Pancreas (tissue), 10 donors: ENCODE measurements at regions of chr22 and their contacts with region 1.

Region 1: DNA sequence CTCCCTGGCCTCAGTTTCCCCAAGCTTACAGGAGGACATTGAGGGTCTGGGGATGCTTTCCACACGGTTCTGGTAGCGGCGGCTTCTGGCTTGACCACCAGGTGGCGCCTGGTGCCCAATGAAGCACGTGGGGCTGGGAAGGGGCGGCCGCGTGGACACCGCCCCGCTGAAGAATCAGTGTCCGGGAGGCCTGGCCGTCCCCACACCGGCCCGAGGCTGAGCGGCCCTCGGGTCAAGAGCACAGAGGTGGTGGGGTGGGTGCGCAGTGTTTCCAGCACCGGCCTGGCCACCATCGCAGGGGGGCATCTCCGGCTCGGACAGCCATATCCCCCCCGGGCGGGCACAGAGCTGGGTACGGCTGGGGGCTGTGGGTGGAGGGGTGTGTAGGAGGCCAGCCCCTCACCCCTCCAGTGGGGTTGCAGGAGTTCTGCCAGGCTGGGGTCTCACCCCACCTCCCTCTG is 27.8 kb upstream of the PPARA start:
- DNase-seq: peak in 5 of 6 donors; percentile 54 to 93 (median 83)
- ATAC-seq: peak; percentile 47 to 80 (median 74)
- H3K4me3 ChIP-seq: no peak overlapping the region
- H3K27ac ChIP-seq: no peak overlapping the region
- H3K4me1 ChIP-seq: no peaks in the 10 kb centered on the region
- H3K27me3 ChIP-seq: no peaks in the 10 kb centered on the region
- CTCF ChIP-seq: peak; percentile 86 to 95 (median 90)

Region 2: GRCh38 chr22:46070803-46071450 is 51.6 kb before region 1 on chr22:
- intact Hi-C with region 1: no loop called
- DNase-seq: peak in 5 of 6 donors; percentile 59 to 88 (median 80)
- ATAC-seq: peak; percentile 5 to 39 (median 16)
- H3K4me3 ChIP-seq: peak overlapping the region; percentile 64 to 98 (median 88)
- H3K27ac ChIP-seq: peak overlapping the region; percentile 99 to 100 (median 100)
- H3K4me1 ChIP-seq: peaks cover 6 to 22% (median 19%) of the 10 kb centered on the region in 3 donors
- H3K27me3 ChIP-seq: no peaks in the 10 kb centered on the region
- CTCF ChIP-seq: no peak

Region 3: GRCh38 chr22:46309526-46310085 is 187.1 kb after region 1 on chr22:
- intact Hi-C with region 1: loop called (anchors 1 to 5 kb)
- DNase-seq: peak in 1 of 6 donors; percentile 37
- ATAC-seq: no peak
- H3K4me3 ChIP-seq: no peak overlapping the region
- H3K27ac ChIP-seq: no peak overlapping the region
- H3K4me1 ChIP-seq: no peaks in the 10 kb centered on the region
- H3K27me3 ChIP-seq: no peaks in the 10 kb centered on the region
- CTCF ChIP-seq: no peak

Region 4: DNA sequence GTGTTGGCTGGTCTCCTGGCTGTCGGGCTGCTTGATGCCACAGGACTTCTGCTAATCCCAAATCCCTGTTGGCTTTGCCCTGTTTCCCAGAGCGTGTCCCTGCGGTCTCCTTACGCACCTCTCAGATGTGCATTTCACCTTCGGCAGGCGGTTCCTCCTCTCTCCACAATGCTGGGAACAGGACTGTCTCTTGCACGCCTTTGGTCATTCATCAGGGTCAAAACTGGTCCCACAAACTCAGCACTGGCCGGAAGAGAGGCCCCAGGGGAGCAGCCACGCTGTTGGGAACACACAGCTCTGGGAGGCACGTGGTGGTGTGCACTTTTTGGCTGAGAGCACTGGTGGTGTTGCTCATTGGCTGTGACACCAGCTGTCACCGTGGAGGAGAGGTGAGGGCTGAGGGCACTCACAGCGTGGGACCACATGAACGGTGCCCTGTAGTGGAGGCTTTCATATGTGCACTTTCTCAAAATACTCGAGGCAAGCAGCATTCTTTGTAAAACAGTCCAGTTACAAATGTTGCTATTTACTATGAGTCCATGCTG is 197.7 kb after region 1 on chr22:
- intact Hi-C with region 1: loop called in 1 of 3 experiments (anchors 2 kb)
- DNase-seq: peak in 2 of 6 donors; percentile 3 to 37
- ATAC-seq: no peak
- H3K4me3 ChIP-seq: no peak overlapping the region
- H3K27ac ChIP-seq: no peak overlapping the region
- H3K4me1 ChIP-seq: no peaks in the 10 kb centered on the region
- H3K27me3 ChIP-seq: no peaks in the 10 kb centered on the region
- CTCF ChIP-seq: no peak